Endothelial cell of umbilical vein (primary cell): ENCODE measurements at regions of chr5 and their contacts with region 1.

Region 1: GRCh38 chr5:112419986-112420864 is 1.1 kb upstream of the EPB41L4A start:
- DNase-seq: peak; percentile 88
- H3K4me3 ChIP-seq: peak overlapping the region; percentile 80 to 97 (median 91)
- H3K27ac ChIP-seq: no peak overlapping the region
- H3K4me1 ChIP-seq: peaks cover 7% of the 10 kb centered on the region
- H3K27me3 ChIP-seq: no peaks in the 10 kb centered on the region
- CTCF ChIP-seq: peak; percentile 92 to 93
- POLR2A ChIP-seq: peak; percentile 10

Region 2: DNA sequence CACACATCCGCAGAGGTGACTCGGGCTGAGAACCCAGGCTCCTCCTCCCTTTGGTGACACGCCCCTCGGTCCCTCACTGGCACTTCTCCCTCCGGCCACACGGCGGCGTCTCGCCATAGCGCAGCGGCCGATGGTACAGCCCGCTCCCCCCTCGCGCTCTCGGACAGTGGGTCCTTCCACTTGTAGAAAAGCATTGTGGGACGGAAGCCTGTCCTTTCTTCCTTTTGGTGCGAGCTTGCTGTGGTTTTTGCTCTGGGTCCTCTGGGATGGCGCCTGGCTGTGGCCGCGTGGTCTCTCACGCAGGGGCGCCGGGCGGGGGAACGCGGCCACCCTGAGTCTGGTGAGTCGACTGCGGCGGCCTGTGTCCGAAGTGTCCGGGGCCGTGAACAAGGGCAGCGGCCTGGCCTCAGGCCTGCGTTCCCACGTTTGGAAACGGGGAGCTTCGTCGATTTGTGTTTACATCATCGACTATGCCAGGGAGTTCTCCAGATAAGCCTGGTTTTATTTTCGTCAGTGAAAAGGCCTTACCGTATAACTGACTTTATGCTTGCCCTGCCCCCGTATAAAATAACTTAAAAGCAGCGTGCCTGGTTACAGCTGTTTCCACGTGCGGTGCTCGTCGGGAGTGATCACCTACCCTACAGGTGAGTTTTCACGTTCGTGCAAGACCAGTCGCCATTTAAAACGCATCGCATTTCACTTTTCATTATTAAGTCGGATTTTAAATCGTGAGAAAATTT is 259.4 kb before region 1 on chr5:
- CTCF ChIA-PET with region 1: interaction called, 52 read pairs
- POLR2A ChIA-PET with region 1: interaction called, 8 read pairs
- dilution Hi-C with region 1: no loop called
- intact Hi-C with region 1: loop called (anchors 1 kb)
- DNase-seq: peak; percentile 92
- H3K4me3 ChIP-seq: peak overlapping the region; percentile 90 to 100 (median 92)
- H3K27ac ChIP-seq: peak overlapping the region; percentile 72
- H3K4me1 ChIP-seq: peaks cover 17% of the 10 kb centered on the region
- H3K27me3 ChIP-seq: peaks cover 0 to 4% of the 10 kb centered on the region in 2 experiments
- CTCF ChIP-seq: peak; percentile 99
- POLR2A ChIP-seq: peak; percentile 98

Region 3: DNA sequence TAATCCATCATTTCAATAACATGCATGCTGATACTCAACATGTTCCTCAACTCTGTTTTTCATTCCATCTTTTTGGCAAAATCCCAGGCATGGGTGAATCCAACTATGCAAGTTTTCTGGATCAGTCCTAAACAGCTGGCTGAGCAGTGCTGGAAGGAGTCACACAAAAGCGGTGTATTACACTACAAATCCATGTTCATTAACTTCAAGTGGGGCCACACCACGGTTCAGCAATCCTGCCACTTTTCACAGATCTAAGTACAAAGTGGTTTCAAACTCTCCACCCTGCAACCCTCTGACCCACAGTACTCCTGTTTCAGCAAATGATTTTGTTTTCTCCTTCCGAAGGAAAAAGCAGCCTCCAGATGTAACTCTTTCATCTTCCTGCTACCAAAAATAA is 223.6 kb before region 1 on chr5:
- CTCF ChIA-PET with region 1: interaction called, 22 read pairs
- POLR2A ChIA-PET with region 1: no interaction called
- dilution Hi-C with region 1: no loop called
- intact Hi-C with region 1: no loop called
- DNase-seq: no peak
- H3K4me3 ChIP-seq: no peak overlapping the region
- H3K27ac ChIP-seq: no peak overlapping the region
- H3K4me1 ChIP-seq: no peaks in the 10 kb centered on the region
- H3K27me3 ChIP-seq: no peaks in the 10 kb centered on the region
- CTCF ChIP-seq: no peak
- POLR2A ChIP-seq: no peak

Region 4: DNA sequence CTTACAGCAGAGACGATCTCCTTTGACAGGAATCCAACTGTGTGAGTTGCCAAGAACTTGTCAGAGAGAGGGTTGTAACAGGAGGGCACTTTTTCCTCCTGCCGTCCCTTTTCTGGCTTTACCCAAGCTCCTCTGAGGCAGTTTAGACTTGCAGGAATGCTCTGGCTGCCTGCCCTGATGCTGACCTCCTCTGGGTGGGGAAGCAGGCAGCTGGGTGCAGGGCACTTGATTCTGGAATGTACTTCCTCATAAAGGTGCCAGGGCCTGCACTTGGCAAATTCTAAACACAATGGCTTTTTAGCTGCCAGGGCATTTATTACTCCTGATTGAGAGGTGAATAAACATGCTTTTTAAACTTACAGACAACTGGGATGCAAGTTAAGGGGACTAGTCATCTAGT is 191.6 kb before region 1 on chr5:
- CTCF ChIA-PET with region 1: interaction called, 27 read pairs
- POLR2A ChIA-PET with region 1: no interaction called
- dilution Hi-C with region 1: no loop called
- intact Hi-C with region 1: no loop called
- DNase-seq: peak; percentile 69
- H3K4me3 ChIP-seq: no peak overlapping the region
- H3K27ac ChIP-seq: no peak overlapping the region
- H3K4me1 ChIP-seq: peaks cover 5% of the 10 kb centered on the region
- H3K27me3 ChIP-seq: no peaks in the 10 kb centered on the region
- CTCF ChIP-seq: no peak
- POLR2A ChIP-seq: no peak

Region 5: DNA sequence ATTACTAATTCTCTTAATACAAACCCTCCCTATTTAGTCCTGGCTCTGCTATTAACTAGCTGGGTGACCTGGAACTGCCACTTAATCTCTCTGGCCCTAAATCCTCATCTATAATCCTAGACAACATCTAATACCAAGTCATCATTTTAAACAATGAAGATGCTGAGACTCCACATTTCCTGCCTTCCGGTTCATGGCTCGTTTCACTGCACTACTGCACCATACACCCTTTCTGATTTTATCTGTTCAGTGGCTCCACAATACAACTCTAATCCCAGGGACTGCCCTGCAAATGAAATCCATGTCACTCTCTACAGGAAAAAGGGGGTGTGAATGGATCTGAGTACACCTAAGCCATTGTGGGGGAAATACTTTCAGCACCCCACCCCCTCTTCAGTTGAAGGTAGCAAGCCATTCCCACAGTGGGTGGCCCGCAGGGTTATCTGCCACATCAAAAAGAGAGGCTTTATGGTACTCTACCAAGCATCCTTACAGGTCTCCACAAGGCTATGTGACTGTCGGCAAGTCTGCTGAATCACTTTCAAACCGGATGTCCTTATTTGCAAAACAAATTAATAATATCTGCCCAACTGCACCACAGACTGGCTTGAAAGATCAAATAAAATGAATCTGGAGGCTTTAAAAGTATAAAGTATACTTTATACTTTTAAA is 90.7 kb before region 1 on chr5:
- CTCF ChIA-PET with region 1: interaction called, 9 read pairs
- POLR2A ChIA-PET with region 1: no interaction called
- dilution Hi-C with region 1: no loop called
- intact Hi-C with region 1: loop called (anchors 2 kb)
- DNase-seq: peak; percentile 53
- H3K4me3 ChIP-seq: no peak overlapping the region
- H3K27ac ChIP-seq: peak overlapping the region; percentile 67
- H3K4me1 ChIP-seq: peaks cover 55% of the 10 kb centered on the region
- H3K27me3 ChIP-seq: no peaks in the 10 kb centered on the region
- CTCF ChIP-seq: no peak
- POLR2A ChIP-seq: no peak

Region 6: GRCh38 chr5:112485934-112486355 is 65.7 kb after region 1 on chr5:
- CTCF ChIA-PET with region 1: interaction called, 16 read pairs
- POLR2A ChIA-PET with region 1: no interaction called
- dilution Hi-C with region 1: no loop called
- intact Hi-C with region 1: no loop called
- DNase-seq: peak; percentile 86
- H3K4me3 ChIP-seq: no peak overlapping the region
- H3K27ac ChIP-seq: peak overlapping the region; percentile 78
- H3K4me1 ChIP-seq: peaks cover 15% of the 10 kb centered on the region
- H3K27me3 ChIP-seq: no peaks in the 10 kb centered on the region
- CTCF ChIP-seq: no peak
- POLR2A ChIP-seq: no peak